GM23248 (cell line): ENCODE measurements at regions of chr11 and their contacts with region 1.

Region 1: DNA sequence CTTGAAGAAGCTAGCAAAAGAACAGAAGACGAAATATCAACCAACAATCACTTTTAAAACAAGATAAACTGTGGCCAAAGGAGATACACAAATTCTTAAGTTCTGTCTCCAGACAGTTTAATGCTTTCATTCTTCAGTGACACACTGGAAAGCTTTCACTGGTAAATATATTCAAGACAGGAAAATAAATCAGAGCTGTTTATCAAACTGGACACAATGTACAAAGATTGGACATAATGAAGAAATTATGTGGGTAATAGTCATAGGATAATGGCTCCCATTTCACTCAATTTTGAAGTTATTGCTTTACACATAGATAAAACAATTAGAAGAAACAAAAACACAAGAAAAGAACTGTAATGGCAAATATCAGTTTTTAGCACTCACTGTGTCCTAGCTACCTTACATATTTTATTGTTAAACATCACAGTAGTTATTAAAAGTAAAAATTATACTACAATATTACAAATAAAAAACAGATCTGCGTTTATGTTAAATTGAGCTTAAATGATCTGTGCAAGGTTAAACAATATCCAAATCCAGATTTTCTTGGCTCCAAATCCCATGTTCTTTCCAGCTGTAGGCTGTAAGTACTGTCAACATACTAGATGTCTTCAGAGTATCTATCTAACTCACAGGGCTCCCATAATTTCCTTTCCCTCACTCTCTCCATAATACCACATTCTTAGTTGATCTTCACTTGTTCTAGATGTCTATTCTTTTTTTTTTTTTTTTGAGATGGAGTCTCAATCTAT is 38.6 kb upstream of the NOX4 start:
- DNase-seq: no peak
- H3K4me3 ChIP-seq: no peak overlapping the region
- H3K27ac ChIP-seq: no peak overlapping the region
- H3K4me1 ChIP-seq: no peaks in the 10 kb centered on the region
- H3K27me3 ChIP-seq: no peaks in the 10 kb centered on the region; the same call in 1 of the 2 replicates

Region 2: GRCh38 chr11:89189776-89190175 is 340.0 kb before region 1 on chr11:
- in situ Hi-C with region 1: no loop called
- DNase-seq: no peak
- H3K4me3 ChIP-seq: no peak overlapping the region
- H3K27ac ChIP-seq: no peak overlapping the region
- H3K4me1 ChIP-seq: peaks cover 2% of the 10 kb centered on the region; the same call in 1 of the 2 replicates
- H3K27me3 ChIP-seq: no peaks in the 10 kb centered on the region

Region 3: GRCh38 chr11:89416961-89417360 is 112.8 kb before region 1 on chr11:
- in situ Hi-C with region 1: no loop called
- DNase-seq: no peak
- H3K4me3 ChIP-seq: no peak overlapping the region
- H3K27ac ChIP-seq: no peak overlapping the region
- H3K4me1 ChIP-seq: no peaks in the 10 kb centered on the region
- H3K27me3 ChIP-seq: no peaks in the 10 kb centered on the region

Region 4: DNA sequence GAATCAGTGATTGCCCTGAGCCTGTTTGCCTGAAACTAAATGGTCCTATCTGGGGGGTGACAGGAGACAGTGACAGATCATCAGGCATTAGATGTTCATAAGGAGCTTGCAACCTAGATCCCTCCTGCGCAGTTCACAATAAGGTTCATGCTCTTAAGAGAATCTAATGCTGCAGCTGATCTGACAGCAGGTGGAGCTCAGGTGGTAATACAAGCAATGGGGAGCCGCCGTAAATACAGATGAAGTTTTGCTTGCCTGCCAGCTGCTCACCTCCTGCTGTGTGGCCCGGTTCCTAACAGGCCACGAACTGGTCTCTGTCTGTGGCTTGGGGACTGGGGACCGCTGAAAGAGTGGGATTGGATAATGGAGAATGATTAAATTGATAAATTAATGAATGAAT is 52.6 kb before region 1 on chr11:
- in situ Hi-C with region 1: loop called (anchors 10 kb)
- DNase-seq: no peak
- H3K4me3 ChIP-seq: no peak overlapping the region
- H3K27ac ChIP-seq: no peak overlapping the region
- H3K4me1 ChIP-seq: no peaks in the 10 kb centered on the region
- H3K27me3 ChIP-seq: no peaks in the 10 kb centered on the region